ENCODE measurements at regions of chr18 and their contacts with region 1.

Region 1: DNA sequence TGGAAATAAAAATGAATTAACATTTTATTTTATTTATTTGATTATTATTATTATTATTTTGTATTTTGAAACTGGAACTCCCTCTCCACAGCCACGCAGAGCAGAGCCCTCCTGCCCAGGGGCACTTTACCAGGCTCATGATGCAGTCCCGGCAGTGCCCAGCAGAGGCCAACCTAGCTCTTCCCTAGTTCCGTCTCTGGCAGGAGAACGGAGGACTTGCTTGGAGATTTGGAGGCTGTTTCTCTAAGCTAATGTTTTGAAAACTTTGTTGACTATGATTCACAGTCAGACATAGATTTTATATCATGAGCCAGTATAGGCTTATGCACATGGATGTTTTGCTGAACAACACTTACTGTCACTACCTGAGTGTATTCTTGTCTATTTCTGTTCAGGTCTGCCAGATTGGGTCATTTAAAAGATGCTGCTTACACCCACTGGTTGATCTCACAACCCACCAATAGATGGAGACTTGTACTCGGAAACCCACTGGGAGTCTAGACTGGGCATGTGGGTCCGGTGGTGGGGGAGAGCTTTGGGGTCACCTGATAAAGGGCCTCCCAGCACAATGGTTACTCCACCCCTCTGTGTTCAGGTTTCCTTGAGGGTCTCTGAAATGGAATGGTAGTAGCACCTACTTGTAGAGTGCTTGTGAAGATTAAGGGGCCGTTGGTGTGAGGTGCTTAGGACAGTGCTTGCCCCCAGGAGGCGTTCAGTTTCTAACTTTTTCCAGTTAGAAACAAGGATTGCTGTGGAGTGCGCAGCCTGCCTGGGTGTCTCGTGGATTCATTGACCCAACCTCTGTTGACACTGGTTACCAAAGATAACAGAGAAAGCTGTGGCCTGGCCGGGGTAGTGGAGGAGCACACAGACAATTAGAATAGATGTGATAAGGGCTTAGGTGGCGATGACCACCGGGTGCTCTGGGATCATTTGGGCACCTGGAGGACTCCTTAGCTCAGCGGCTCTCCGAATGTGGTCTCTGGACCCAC is 177.3 kb downstream of the HAUS1 start:
- DNase-seq: peak; percentile 77
- ATAC-seq: peak; percentile 85

Region 2: DNA sequence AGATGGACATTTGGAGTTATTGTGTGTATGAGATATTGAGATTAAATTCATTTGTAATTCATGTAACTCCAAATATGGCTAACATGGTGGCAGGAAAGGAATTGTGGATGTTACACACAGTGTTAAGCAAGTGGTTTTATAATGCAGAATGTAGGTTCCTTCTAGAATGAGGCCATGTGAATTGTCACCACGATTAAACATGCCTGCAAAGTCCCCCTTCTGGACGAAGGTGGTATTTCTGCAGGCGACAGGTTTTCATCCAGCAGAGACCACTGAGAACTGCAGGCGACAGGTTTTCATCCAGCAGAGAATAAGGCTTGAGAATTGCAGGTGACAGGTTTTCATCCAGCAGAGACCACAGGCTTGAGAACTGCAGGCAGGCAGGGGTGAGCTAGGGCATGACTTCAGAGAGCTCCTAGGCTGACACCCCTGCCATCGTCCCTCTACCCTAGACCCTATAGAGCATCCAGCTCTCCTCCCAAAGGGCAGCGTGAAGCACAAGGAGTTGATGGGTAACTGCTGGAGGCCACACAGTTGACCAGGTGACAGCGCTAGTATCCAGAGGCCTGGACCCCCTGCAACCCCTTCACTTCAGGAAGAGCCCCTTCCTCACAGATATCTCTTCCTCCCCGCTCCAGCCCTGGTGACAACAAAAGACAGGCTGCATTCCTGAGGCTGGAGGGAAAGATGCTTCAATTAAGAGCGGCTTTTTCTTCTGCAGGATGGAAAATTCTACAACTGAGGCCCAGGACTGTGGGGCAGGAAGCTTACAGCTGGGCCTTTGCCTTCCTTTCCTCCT is 199.8 kb after region 1 on chr18:
- intact Hi-C with region 1: loop called (anchors 10 kb)
- DNase-seq: no peak
- ATAC-seq: peak; percentile 61

Region 3: GRCh38 chr18:46497129-46497528 is 215.6 kb after region 1 on chr18:
- intact Hi-C with region 1: no loop called
- DNase-seq: peak; percentile 52
- ATAC-seq: no peak